ENCODE measurements at regions of chr15 and their contacts with region 1.

Region 1: GRCh38 chr15:74906446-74907162 is at the start of gene FAM219B:
- DNase-seq: peak in 1 of 2 experiments; percentile 90
- H3K4me3 ChIP-seq: peak within 1 kb of the TSS; percentile 79 to 94 (median 90)
- H3K27ac ChIP-seq: peak within 1 kb of the TSS; percentile 71
- H3K4me1 ChIP-seq: peaks cover 2 to 4% (median 3%) of the 10 kb centered on the region in 4 experiments
- H3K27me3 ChIP-seq: no peaks in the 10 kb centered on the region
- CTCF ChIP-seq: no peak
- EP300 ChIP-seq: no peak
- POLR2A ChIP-seq: peak; percentile 61 to 69; a peak in 2 of 3 replicates
- RAD21 ChIP-seq: no peak
- total RNA-seq, gene FAM219B: 56.1 and 57.1 TPM in 2 replicates

Region 2: GRCh38 chr15:74808073-74808755 is 98.4 kb before region 1 on chr15:
- CTCF ChIA-PET with region 1: interaction called, 10 read pairs
- POLR2A ChIA-PET with region 1: no interaction called
- DNase-seq: no peak
- H3K4me3 ChIP-seq: no peak overlapping the region
- H3K27ac ChIP-seq: no peak overlapping the region
- H3K4me1 ChIP-seq: peaks cover 0 to 2% (median 1%) of the 10 kb centered on the region in 4 experiments; a peak in 2 of 7 replicates
- H3K27me3 ChIP-seq: no peaks in the 10 kb centered on the region
- CTCF ChIP-seq: no peak
- EP300 ChIP-seq: no peak
- POLR2A ChIP-seq: no peak
- RAD21 ChIP-seq: no peak

Region 3: DNA sequence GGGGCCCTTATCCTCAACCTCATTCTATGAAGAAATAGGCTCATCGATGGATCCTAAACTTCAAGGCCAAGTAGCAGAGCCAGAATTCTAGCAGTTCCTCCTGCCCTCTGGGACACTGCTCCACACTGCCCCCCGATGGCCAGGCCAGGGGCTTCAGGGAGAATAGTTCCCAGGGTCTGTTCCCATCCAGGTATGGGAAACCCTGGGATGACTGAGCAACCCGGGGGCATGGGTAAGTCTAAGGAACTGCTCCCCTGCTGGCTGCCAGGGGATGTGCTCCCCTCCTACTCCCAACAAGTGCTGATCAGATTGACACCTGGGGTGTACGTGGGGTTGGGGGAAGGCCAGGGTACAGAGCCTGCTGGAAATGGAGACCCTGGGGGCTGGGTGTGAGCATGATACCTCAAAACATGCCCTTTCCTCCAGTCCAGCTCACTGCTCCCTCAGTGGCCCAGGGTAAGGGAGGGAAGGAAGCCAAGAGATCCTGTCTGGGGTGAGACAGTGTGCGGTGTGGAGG is 71.2 kb before region 1 on chr15:
- CTCF ChIA-PET with region 1: interaction called, 23 read pairs
- POLR2A ChIA-PET with region 1: no interaction called
- DNase-seq: peak; percentile 82 to 98
- H3K4me3 ChIP-seq: no peak overlapping the region
- H3K27ac ChIP-seq: peak overlapping the region; percentile 47; the same call in 1 of the 2 replicates
- H3K4me1 ChIP-seq: peaks cover 0 to 4% (median 2%) of the 10 kb centered on the region in 4 experiments; a peak in 4 of 7 replicates
- H3K27me3 ChIP-seq: no peaks in the 10 kb centered on the region; a peak in 1 of 7 replicates
- CTCF ChIP-seq: peak; percentile 73 to 98 (median 97)
- EP300 ChIP-seq: peak in 1 of 2 experiments; percentile 35; a peak in 1 of 3 replicates
- POLR2A ChIP-seq: no peak
- RAD21 ChIP-seq: peak; percentile 62 to 76

Region 4: DNA sequence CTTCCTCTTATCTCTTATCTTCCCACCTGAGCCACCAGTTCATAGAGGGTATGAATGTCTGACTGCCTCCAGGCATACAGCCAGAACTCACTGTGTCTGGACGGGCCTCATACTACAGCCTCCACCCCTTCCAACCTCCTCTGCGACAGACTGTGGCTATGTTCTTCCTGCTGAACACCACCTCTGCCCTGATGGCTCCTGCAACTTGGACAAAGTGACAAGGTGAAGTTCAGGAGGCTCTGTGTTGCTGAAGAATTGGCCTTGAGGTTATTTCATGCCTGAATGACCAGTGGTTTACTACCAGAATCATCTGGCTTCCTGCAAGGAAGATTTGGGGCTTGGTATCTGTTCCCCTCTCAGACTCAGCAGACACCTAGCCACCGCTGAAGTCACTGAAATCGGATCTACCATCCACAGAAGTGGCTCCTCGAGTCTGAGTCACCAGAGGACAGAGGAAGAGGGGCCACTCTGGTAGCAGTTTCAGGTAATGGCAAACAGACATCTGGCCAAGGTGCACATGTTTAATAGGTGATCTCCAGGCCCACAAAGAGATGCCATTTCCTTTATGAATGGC is 49.4 kb before region 1 on chr15:
- CTCF ChIA-PET with region 1: interaction called, 21 read pairs
- POLR2A ChIA-PET with region 1: interaction called, 6 read pairs
- DNase-seq: no peak
- H3K4me3 ChIP-seq: no peak overlapping the region
- H3K27ac ChIP-seq: no peak overlapping the region
- H3K4me1 ChIP-seq: peaks cover 0 to 1% (median 0%) of the 10 kb centered on the region in 4 experiments; a peak in 1 of 7 replicates
- H3K27me3 ChIP-seq: no peaks in the 10 kb centered on the region
- CTCF ChIP-seq: no peak
- EP300 ChIP-seq: no peak
- POLR2A ChIP-seq: no peak
- RAD21 ChIP-seq: no peak

Region 5: GRCh38 chr15:74882528-74882927 is 24.1 kb before region 1 on chr15:
- CTCF ChIA-PET with region 1: interaction called, 15 read pairs
- POLR2A ChIA-PET with region 1: interaction called, 3 read pairs
- DNase-seq: no peak
- H3K4me3 ChIP-seq: no peak overlapping the region
- H3K27ac ChIP-seq: no peak overlapping the region
- H3K4me1 ChIP-seq: peaks cover 0 to 3% (median 1%) of the 10 kb centered on the region in 4 experiments; a peak in 3 of 7 replicates
- H3K27me3 ChIP-seq: no peaks in the 10 kb centered on the region
- CTCF ChIP-seq: no peak
- EP300 ChIP-seq: no peak
- POLR2A ChIP-seq: no peak
- RAD21 ChIP-seq: no peak

Region 6: GRCh38 chr15:74937596-74938296 is 31.1 kb after region 1 on chr15 and contains the start of gene COX5A:
- CTCF ChIA-PET with region 1: interaction called, 7 read pairs
- POLR2A ChIA-PET with region 1: interaction called, 11 read pairs
- DNase-seq: peak; percentile 87 to 90
- H3K4me3 ChIP-seq: peak within 1 kb of the TSS; percentile 84 to 91 (median 86)
- H3K27ac ChIP-seq: peak within 1 kb of the TSS; percentile 93; the same call in 1 of the 2 replicates
- H3K4me1 ChIP-seq: no peaks in the 10 kb centered on the region
- H3K27me3 ChIP-seq: no peaks in the 10 kb centered on the region
- CTCF ChIP-seq: no peak
- EP300 ChIP-seq: 0 out of 3 replicates have a peak, but pooled peaks of 1 of the 2 experiments have one; percentile 30
- POLR2A ChIP-seq: peak; percentile 72 to 73
- RAD21 ChIP-seq: no peak
- total RNA-seq, gene COX5A: 367 and 373 TPM in 2 replicates

Region 7: DNA sequence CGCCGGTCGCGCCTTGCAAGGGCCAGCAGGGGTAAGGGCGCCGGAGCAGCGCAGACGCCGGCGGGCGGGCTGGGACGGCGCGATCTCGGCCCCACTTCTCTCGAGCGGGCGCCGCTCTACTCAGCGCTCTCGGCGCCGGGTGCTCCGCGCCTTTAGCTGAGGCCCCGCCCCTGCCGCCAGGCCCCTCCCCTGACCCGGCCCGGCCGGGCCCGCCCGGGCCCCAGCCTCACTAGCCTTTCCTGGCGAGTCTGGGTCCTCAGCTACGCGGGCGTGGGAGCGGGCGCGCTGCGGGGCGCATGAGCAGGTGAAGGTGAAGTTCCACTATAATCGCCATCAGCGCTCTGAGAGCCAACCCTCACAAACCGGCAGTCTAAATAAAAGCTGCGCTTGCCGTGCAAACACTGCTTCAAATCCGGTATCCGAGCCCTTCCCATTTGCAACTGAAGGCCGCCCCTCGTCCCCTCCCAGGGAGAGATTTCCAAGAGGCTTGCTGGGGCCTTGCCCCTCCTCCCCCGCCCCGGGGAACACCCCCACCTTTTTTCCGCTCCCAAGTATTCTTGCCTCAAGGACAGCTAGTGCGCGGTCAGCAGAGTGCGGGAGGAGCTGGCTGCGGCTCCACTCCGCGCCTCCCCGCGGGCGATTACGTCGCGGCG is 50.2 kb after region 1 on chr15 and contains the start of gene RPP25:
- CTCF ChIA-PET with region 1: interaction called, 52 read pairs
- POLR2A ChIA-PET with region 1: interaction called, 16 read pairs
- DNase-seq: peak in 1 of 2 experiments; percentile 90
- H3K4me3 ChIP-seq: peak within 1 kb of the TSS; percentile 41 to 77 (median 69)
- H3K27ac ChIP-seq: peak within 1 kb of the TSS; percentile 33; the same call in 1 of the 2 replicates
- H3K4me1 ChIP-seq: peaks cover 0 to 22% (median 13%) of the 10 kb centered on the region in 4 experiments; a peak in 6 of 7 replicates
- H3K27me3 ChIP-seq: peaks cover 5 to 36% (median 33%) of the 10 kb centered on the region in 4 experiments
- CTCF ChIP-seq: no peak
- EP300 ChIP-seq: no peak
- POLR2A ChIP-seq: peak in 1 of 2 experiments; percentile 87; a peak in 2 of 3 replicates
- RAD21 ChIP-seq: no peak
- total RNA-seq, gene RPP25: 19.4 and 19.8 TPM in 2 replicates